OCI-LY7 (cell line): ENCODE measurements at regions of chr1 and their contacts with region 1.

Region 1: DNA sequence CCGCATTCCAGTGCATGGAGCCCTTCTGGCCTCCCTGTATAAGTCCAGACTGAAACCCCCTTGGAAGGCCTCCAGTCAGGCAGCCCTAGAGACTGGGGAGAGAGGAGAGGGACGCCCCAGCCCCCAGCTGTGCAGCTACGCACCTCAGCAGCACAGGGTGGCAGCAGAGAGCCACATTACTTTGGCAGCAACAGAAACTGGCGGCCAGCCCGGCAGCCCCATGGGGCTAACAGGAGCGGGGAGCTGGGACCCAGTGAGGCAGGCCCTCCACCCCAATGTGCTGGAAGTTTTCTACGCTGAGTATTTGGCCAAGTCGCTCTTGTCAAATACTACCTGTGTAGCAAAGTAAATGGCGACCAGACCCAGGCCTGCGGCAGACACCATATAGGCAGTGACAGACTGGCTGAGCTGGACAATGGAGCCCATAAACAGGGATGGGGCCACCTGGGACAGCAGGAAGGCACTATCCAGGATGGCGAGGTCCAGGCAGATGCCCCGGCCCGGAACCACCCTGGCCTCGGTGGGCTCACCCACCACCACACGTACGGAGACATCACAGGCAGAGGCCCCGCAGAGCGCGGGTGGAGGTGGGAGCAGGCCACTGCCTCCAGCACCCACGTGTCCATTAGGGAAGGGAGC is 21.2 kb downstream of the SLC45A3 start:
- DNase-seq: peak; percentile 82
- H3K4me3 ChIP-seq: no peak overlapping the region
- H3K27ac ChIP-seq: no peak overlapping the region
- H3K4me1 ChIP-seq: peaks cover 22% of the 10 kb centered on the region
- CTCF ChIP-seq: peak; percentile 96

Region 2: GRCh38 chr1:205183676-205184335 is 475.3 kb before region 1 on chr1:
- CTCF ChIA-PET with region 1: no interaction called
- POLR2A ChIA-PET with region 1: no interaction called
- intact Hi-C with region 1: no loop called
- DNase-seq: no peak
- H3K4me3 ChIP-seq: no peak overlapping the region
- H3K27ac ChIP-seq: no peak overlapping the region
- H3K4me1 ChIP-seq: no peaks in the 10 kb centered on the region
- CTCF ChIP-seq: no peak

Region 3: GRCh38 chr1:205485338-205486228 is 173.5 kb before region 1 on chr1:
- CTCF ChIA-PET with region 1: no interaction called
- POLR2A ChIA-PET with region 1: interaction called, 7 read pairs
- intact Hi-C with region 1: loop called (anchors 2 kb)
- DNase-seq: peak; percentile 84
- H3K4me3 ChIP-seq: no peak overlapping the region
- H3K27ac ChIP-seq: no peak overlapping the region
- H3K4me1 ChIP-seq: peaks cover 10% of the 10 kb centered on the region
- CTCF ChIP-seq: peak; percentile 94

Region 4: GRCh38 chr1:205591522-205592351 is 67.3 kb before region 1 on chr1:
- CTCF ChIA-PET with region 1: interaction called, 24 read pairs
- POLR2A ChIA-PET with region 1: interaction called, 30 read pairs
- intact Hi-C with region 1: loop called (anchors 1 kb)
- DNase-seq: peak; percentile 88
- H3K4me3 ChIP-seq: peak overlapping the region; percentile 66
- H3K27ac ChIP-seq: peak overlapping the region; percentile 93
- H3K4me1 ChIP-seq: peaks cover 65% of the 10 kb centered on the region
- CTCF ChIP-seq: peak; percentile 96

Region 5: GRCh38 chr1:205678286-205679111 is 19.4 kb after region 1 on chr1:
- CTCF ChIA-PET with region 1: interaction called, 10 read pairs
- POLR2A ChIA-PET with region 1: interaction called, 3 read pairs
- intact Hi-C with region 1: no loop called
- DNase-seq: no peak
- H3K4me3 ChIP-seq: peak overlapping the region; percentile 74
- H3K27ac ChIP-seq: no peak overlapping the region
- H3K4me1 ChIP-seq: peaks cover 30% of the 10 kb centered on the region
- CTCF ChIP-seq: no peak

Region 6: DNA sequence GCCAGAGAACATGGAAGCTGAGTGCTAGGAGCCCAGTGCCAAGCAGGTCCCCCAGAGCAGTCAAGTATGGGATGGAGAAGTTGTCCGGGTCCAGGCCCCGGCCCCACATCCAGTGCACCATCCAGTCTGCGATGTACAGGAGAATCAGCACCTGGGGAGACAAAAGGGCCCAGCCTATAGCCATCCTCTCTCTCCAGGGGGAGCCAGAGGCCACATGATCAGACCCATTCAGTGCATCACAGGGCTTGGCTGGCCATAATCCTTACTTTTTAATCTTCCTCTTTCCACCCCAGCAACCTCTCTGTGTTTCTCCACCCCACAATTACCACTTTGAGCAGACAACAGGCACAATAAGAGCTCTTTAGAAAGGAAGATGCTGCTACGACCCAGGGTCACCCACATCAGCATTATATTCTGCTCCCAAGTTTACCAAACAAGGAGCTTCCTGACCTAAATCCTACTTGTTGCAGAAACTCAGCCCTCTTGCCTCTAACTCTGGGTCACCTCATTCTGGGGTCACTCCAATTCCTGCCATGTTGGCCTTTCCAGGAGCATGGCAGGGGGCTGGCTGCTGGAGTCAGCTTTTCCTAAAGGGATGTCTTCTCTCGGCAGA is 132.6 kb after region 1 on chr1:
- CTCF ChIA-PET with region 1: interaction called, 3 read pairs
- POLR2A ChIA-PET with region 1: no interaction called
- intact Hi-C with region 1: loop called (anchors 2 kb)
- DNase-seq: peak; percentile 70
- H3K4me3 ChIP-seq: no peak overlapping the region
- H3K27ac ChIP-seq: no peak overlapping the region
- H3K4me1 ChIP-seq: peaks cover 18% of the 10 kb centered on the region
- CTCF ChIP-seq: peak; percentile 93

Region 7: GRCh38 chr1:205977402-205978014 is 318.4 kb after region 1 on chr1:
- CTCF ChIA-PET with region 1: interaction called, 6 read pairs
- POLR2A ChIA-PET with region 1: no interaction called
- intact Hi-C with region 1: loop called (anchors 2 kb)
- DNase-seq: peak; percentile 83
- H3K4me3 ChIP-seq: no peak overlapping the region
- H3K27ac ChIP-seq: no peak overlapping the region
- H3K4me1 ChIP-seq: no peaks in the 10 kb centered on the region
- CTCF ChIP-seq: peak; percentile 98